ENCODE measurements at regions of chr3 and their contacts with region 1.

Region 1: DNA sequence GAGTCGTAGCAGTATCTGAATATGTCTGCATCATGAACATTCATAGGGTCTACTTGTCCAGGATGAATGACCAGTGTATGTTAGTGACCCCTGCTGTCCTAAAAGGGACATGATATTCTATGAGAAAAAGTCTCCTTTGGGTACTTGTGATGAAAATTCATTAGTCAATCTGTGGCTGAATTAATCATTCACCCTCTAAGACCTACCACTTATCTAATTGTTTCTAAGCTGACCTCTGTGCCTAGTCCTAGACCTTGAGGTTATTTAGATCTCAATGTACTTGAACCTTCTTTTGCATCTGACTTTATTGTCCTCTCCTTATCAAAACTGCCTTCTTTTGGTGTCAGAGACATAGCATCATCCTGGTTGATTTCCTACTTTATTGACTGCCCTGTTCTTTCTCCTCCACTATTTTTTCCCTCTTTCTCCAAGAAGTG is 799.3 kb downstream of the DIPK2A start:
- DNase-seq: no peak
- H3K4me3 ChIP-seq: no peak overlapping the region
- H3K27ac ChIP-seq: no peak overlapping the region
- H3K4me1 ChIP-seq: peaks cover 0 to 5% of the 10 kb centered on the region in 2 donors
- H3K27me3 ChIP-seq: no peaks in the 10 kb centered on the region
- CTCF ChIP-seq: peak in 2 of 3 experiments; percentile 27 to 38

Region 2: DNA sequence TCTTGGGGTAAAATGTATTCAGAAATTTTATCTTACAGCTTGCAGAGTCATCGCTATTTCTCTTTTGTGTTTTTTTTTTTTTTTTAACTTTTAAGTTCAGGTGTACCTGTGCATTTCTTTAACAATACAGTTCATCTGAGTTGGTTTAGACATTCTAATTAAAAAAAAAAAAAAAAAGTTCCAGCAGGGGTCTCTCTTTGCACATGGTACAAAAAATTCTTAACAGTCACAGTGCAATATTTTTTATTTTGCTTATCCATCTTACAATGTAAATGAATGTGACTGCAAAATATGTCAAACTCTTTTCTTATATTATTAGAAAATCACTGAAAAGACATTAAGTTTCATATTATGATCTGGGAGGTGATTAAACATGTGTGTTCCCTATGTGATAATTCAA is 875.1 kb before region 1 on chr3:
- intact Hi-C with region 1: loop called (anchors 5 kb)
- DNase-seq: no peak
- H3K4me3 ChIP-seq: no peak overlapping the region
- H3K27ac ChIP-seq: no peak overlapping the region
- H3K4me1 ChIP-seq: no peaks in the 10 kb centered on the region
- H3K27me3 ChIP-seq: no peaks in the 10 kb centered on the region
- CTCF ChIP-seq: peak in 2 of 3 experiments; percentile 25 to 40